ENCODE measurements at regions of chr10 and their contacts with region 1.

Region 1: GRCh38 chr10:18456984-18457383 is 194.4 kb downstream of the NSUN6 start:
- DNase-seq: no peak
- ATAC-seq: peak; percentile 75
- H3K4me3 Mint-ChIP-seq: no peak overlapping the region
- H3K27ac Mint-ChIP-seq: peak overlapping the region; percentile 3
- H3K4me1 Mint-ChIP-seq: peaks cover 20% of the 10 kb centered on the region
- H3K27me3 Mint-ChIP-seq: no peaks in the 10 kb centered on the region
- CTCF ChIP-seq: no peak

Region 2: DNA sequence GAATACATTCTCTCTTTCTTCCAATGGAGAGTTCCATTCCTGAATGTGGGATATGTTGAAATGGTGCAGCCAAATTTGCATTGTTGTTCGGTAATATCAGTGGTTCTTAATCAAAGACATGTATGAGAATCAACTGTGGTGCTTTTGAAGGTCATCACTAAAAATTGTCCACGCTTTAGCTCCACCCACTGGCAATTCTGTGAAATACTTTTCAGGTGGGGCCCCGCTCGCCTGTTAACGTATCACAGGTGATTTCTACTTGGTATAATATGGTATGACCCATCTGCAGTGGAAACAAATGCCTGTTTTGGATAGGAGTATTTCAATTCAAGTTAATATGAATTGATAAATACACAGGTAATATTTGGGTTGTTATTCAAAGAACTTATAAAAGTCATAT is 16.0 kb after region 1 on chr10:
- CTCF ChIA-PET with region 1: no interaction called
- POLR2A ChIA-PET with region 1: interaction called, 11 read pairs
- intact Hi-C with region 1: no loop called
- DNase-seq: no peak
- ATAC-seq: no peak
- H3K4me3 Mint-ChIP-seq: no peak overlapping the region
- H3K27ac Mint-ChIP-seq: no peak overlapping the region
- H3K4me1 Mint-ChIP-seq: peaks cover 7% of the 10 kb centered on the region
- H3K27me3 Mint-ChIP-seq: no peaks in the 10 kb centered on the region
- CTCF ChIP-seq: no peak

Region 3: DNA sequence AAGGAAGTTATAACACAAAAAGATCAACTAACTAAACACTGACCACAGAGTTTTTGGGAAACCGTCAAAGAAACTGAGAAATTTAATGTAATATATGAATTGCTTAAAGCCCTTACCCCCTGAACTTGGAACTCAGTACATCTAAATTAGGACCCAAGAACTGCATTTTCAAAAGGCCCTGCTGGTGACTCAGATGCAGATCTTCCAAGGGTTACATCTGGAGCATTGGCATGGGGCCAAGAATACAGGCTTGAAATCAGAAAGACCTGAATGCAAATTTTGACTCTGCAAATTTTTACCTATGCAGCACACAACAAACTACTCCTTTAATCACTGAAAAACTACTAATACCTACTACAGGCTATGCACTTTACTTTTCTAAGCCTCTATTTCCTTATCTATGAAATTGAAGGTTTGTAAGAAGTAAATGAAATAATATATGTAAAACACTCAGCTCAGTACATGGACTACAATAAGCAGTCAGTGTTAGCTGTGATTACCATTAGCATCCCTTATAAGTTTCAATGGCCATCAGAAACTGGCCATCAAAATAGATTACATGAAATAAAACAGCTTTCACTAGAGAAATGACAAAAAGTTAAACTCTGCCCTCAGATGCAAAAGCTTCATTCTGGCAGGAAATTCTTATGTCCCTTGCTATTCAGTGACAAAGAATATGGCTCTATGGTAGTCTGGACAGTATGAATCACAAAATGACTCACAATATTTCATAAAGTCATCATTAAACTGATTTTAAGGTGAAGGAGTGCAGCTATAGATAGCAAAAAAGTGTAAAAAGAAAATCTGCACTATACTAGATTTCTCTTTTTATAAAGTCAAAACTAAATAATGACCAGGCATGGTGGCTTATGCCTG is 150.8 kb after region 1 on chr10:
- CTCF ChIA-PET with region 1: no interaction called
- POLR2A ChIA-PET with region 1: no interaction called
- intact Hi-C with region 1: no loop called
- DNase-seq: no peak
- ATAC-seq: no peak
- H3K4me3 Mint-ChIP-seq: no peak overlapping the region
- H3K27ac Mint-ChIP-seq: no peak overlapping the region
- H3K4me1 Mint-ChIP-seq: no peaks in the 10 kb centered on the region
- H3K27me3 Mint-ChIP-seq: no peaks in the 10 kb centered on the region
- CTCF ChIP-seq: no peak

Region 4: GRCh38 chr10:18689498-18689897 is 232.5 kb after region 1 on chr10:
- CTCF ChIA-PET with region 1: no interaction called
- POLR2A ChIA-PET with region 1: no interaction called
- intact Hi-C with region 1: no loop called
- DNase-seq: no peak
- ATAC-seq: no peak
- H3K4me3 Mint-ChIP-seq: no peak overlapping the region
- H3K27ac Mint-ChIP-seq: no peak overlapping the region
- H3K4me1 Mint-ChIP-seq: no peaks in the 10 kb centered on the region
- H3K27me3 Mint-ChIP-seq: peaks cover 2% of the 10 kb centered on the region
- CTCF ChIP-seq: no peak

Measured in activated B cell treated with CpG ODN at 0.5 μM for 24 hours (primary cell).